HepG2 (cell line): ENCODE measurements at regions of chr1 and their contacts with region 1.

Region 1: GRCh38 chr1:241531195-241532161 is 700 bp upstream of the KMO start:
- DNase-seq: peak; percentile 71
- ATAC-seq: peak; percentile 96
- H3K4me3 ChIP-seq: peak overlapping the region; percentile 66 to 85 (median 68)
- H3K27ac ChIP-seq: no peak overlapping the region
- H3K4me1 ChIP-seq: 0 out of 2 replicates have a peak, but pooled peaks cover 7% of the 10 kb centered on the region
- H3K27me3 ChIP-seq: no peaks in the 10 kb centered on the region; a peak in 1 of 5 replicates
- CTCF ChIP-seq: peak; percentile 70
- EP300 ChIP-seq: no peak
- POLR2A ChIP-seq: no peak
- RAD21 ChIP-seq: peak; percentile 35; the same call in 1 of the 2 replicates

Region 2: GRCh38 chr1:241499910-241500309 is 31.6 kb before region 1 on chr1:
- CTCF ChIA-PET with region 1: no interaction called
- POLR2A ChIA-PET with region 1: no interaction called
- in situ Hi-C with region 1: no loop called
- intact Hi-C with region 1: no loop called
- DNase-seq: peak; percentile 14
- ATAC-seq: no peak
- H3K4me3 ChIP-seq: no peak overlapping the region
- H3K27ac ChIP-seq: no peak overlapping the region
- H3K4me1 ChIP-seq: no peaks in the 10 kb centered on the region
- H3K27me3 ChIP-seq: no peaks in the 10 kb centered on the region
- CTCF ChIP-seq: peak; percentile 53
- EP300 ChIP-seq: no peak
- POLR2A ChIP-seq: no peak
- RAD21 ChIP-seq: no peak

Region 3: DNA sequence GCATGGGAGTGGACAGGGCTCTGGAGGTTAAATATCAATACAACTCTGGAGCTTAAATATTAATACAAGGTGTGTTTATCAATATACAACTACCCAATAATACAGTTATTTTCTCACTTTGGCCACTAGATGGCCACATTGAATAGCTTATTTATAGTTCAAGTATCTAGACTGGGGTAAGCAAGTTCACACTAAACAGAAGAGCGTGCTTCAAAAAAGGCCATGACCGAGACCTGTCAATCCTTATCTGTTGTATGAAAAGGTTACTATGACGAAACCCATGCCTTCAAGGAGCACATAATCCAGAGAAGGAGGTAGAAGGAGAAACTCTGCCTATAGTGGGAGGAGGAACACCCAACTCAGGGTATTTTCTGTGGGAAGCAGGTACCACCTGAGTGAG is 79.6 kb after region 1 on chr1:
- CTCF ChIA-PET with region 1: no interaction called
- POLR2A ChIA-PET with region 1: no interaction called
- in situ Hi-C with region 1: no loop called
- intact Hi-C with region 1: loop called (anchors 5 kb)
- DNase-seq: peak; percentile 72
- ATAC-seq: peak; percentile 70
- H3K4me3 ChIP-seq: no peak overlapping the region
- H3K27ac ChIP-seq: no peak overlapping the region
- H3K4me1 ChIP-seq: peaks cover 28% of the 10 kb centered on the region
- H3K27me3 ChIP-seq: no peaks in the 10 kb centered on the region
- CTCF ChIP-seq: peak; percentile 67
- EP300 ChIP-seq: no peak
- POLR2A ChIP-seq: no peak
- RAD21 ChIP-seq: peak; percentile 58

Region 4: DNA sequence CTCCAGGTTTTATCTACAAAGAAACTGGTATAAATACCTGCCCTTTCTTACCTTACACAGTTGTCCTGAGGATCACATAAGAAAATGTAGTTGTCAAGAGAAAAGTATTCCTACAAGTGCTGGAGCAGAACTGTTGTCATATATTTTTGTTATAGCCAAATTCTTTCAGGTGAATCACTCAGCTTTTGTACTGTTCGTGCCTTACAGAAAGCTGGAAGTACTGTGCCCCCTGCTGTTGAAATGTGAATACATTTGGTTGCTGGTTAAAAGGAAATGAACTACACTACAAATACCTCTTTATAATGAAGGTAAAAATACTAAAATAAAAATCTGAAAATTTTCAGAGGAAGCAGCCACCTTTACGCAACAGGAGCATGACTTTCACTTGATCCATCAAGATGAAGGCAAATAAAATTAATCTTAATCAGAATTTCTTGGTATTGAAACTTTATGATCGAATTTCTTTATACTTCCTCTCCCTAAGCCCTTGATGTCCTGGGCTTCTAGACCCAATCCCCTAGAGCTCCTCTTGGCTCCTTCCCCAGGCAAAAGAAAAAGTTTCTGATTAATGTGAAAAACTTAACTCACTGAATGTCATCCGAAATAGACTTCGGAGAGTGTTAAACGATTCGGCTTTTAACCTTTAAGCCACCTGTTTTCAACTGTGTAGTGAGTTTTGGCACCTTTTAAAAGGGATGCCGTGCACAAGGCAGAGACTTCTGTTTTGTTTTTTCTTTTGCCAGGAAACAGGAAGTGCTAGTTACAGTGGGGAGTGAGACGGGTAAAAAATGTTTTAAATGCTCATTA is 96.2 kb after region 1 on chr1:
- CTCF ChIA-PET with region 1: interaction called, 6 read pairs
- POLR2A ChIA-PET with region 1: no interaction called
- in situ Hi-C with region 1: loop called (anchors 10 kb)
- intact Hi-C with region 1: loop called (anchors 1 kb)
- DNase-seq: peak; percentile 60
- ATAC-seq: peak; percentile 74
- H3K4me3 ChIP-seq: no peak overlapping the region
- H3K27ac ChIP-seq: no peak overlapping the region
- H3K4me1 ChIP-seq: peaks cover 18% of the 10 kb centered on the region
- H3K27me3 ChIP-seq: no peaks in the 10 kb centered on the region
- CTCF ChIP-seq: peak; percentile 60
- EP300 ChIP-seq: no peak
- POLR2A ChIP-seq: no peak
- RAD21 ChIP-seq: no peak

Region 5: DNA sequence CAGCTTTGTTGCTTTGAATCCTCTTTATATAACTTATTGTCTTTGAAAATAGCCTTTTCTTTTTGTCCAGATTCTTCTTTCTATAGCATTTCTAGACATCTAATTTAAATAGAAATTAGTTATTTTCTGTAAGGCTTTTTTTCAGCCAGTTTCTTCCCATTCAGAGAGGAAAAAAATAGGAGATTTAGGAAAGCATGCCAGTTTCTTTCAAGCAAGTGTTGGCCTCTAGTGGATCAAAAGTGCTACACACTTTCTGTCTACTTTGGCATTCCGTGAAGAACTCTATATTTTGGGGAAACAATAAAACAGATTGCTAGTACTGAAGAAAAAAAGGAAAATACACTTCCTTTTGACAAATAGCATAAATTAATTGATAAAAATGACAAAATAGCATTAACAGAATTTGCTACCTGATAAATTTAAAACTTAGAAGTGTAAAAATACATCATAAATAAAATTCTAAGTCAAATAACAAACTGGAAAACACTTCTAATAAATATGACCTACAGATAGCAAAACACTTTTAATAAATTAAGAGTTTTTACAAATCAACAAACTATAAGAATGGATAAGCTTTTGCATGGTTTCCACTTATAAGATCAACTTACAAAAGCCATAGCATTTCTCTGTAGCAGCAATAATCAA is 303.4 kb after region 1 on chr1:
- CTCF ChIA-PET with region 1: interaction called, 3 read pairs
- POLR2A ChIA-PET with region 1: no interaction called
- in situ Hi-C with region 1: loop called (anchors 5 kb)
- intact Hi-C with region 1: loop called (anchors 1 kb)
- DNase-seq: peak; percentile 28
- ATAC-seq: peak; percentile 61
- H3K4me3 ChIP-seq: no peak overlapping the region
- H3K27ac ChIP-seq: no peak overlapping the region
- H3K4me1 ChIP-seq: no peaks in the 10 kb centered on the region
- H3K27me3 ChIP-seq: no peaks in the 10 kb centered on the region
- CTCF ChIP-seq: peak; percentile 47
- EP300 ChIP-seq: no peak
- POLR2A ChIP-seq: no peak
- RAD21 ChIP-seq: no peak

Region 6: GRCh38 chr1:241998412-241998921 is 467.0 kb after region 1 on chr1:
- CTCF ChIA-PET with region 1: no interaction called
- POLR2A ChIA-PET with region 1: no interaction called
- in situ Hi-C with region 1: loop called (anchors 25 kb)
- intact Hi-C with region 1: loop called (anchors 1 kb)
- DNase-seq: peak; percentile 23
- ATAC-seq: peak; percentile 93
- H3K4me3 ChIP-seq: peak overlapping the region in 2 of 3 experiments; percentile 24 to 53; a peak in 3 of 6 replicates
- H3K27ac ChIP-seq: no peak overlapping the region
- H3K4me1 ChIP-seq: no peaks in the 10 kb centered on the region
- H3K27me3 ChIP-seq: peaks cover 0 to 8% of the 10 kb centered on the region in 2 experiments; a peak in 1 of 5 replicates
- CTCF ChIP-seq: peak; percentile 72
- EP300 ChIP-seq: no peak
- POLR2A ChIP-seq: no peak
- RAD21 ChIP-seq: no peak

Region 7: GRCh38 chr1:242017584-242018233 is 486.2 kb after region 1 on chr1:
- CTCF ChIA-PET with region 1: no interaction called
- POLR2A ChIA-PET with region 1: no interaction called
- in situ Hi-C with region 1: no loop called
- intact Hi-C with region 1: loop called (anchors 1 kb)
- DNase-seq: peak; percentile 47
- ATAC-seq: peak; percentile 73
- H3K4me3 ChIP-seq: no peak overlapping the region
- H3K27ac ChIP-seq: no peak overlapping the region
- H3K4me1 ChIP-seq: no peaks in the 10 kb centered on the region
- H3K27me3 ChIP-seq: no peaks in the 10 kb centered on the region; a peak in 1 of 5 replicates
- CTCF ChIP-seq: peak; percentile 70
- EP300 ChIP-seq: no peak
- POLR2A ChIP-seq: no peak
- RAD21 ChIP-seq: no peak